ENCODE measurements at regions of chrX and their contacts with region 1.

Region 1: GRCh38 chrX:57587607-57588006 is 4.2 kb upstream of the ZXDB start:
- DNase-seq: no peak

Region 2: DNA sequence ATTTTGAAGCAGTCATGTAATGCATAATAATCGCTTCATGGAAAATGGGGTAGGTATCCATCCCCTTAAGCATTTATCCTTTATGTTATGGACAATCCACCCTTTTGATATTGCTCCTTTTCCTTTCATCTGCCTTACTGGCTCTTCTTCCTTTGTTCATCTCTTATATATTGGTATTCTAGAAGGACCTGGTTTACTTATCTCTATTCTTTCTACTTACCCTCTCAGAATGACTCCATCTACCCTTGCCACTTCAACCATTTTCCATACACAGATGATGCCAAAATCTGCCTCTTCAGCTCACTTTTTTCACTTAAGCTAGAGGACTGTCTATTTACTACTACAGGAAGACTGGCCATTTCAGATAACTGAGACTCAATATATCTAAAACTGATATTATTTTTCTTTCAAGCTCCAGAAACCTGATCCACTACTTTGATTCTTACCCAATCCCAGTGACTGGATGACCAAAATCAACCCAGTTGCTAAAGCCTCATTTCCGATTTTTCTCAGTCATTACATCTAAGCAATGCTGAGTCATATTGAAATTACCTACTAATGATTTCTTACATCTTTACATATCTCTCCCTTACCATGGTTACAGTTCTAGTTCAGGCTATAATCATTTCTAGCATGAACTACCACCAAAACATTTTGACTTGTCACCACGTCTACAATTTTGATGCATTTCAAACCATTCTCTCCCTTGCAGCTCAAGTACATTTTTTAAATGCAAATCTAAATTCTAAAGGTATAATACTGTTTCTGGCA is 207.4 kb before region 1 on chrX:
- intact Hi-C with region 1: no loop called
- DNase-seq: no peak

Region 3: GRCh38 chrX:57929373-57929772 is 341.8 kb after region 1 on chrX:
- intact Hi-C with region 1: loop called (anchors 10 kb)
- DNase-seq: no peak

Measured in posterior cingulate gyrus (tissue), 11 donors.